ENCODE measurements at regions of chr3 and their contacts with region 1.

Region 1: GRCh38 chr3:142993958-142994442 is 7.4 kb upstream of the U2SURP start:
- DNase-seq: peak; percentile 44
- H3K4me3 ChIP-seq: no peak overlapping the region
- H3K27ac ChIP-seq: no peak overlapping the region
- H3K4me1 ChIP-seq: no peaks in the 10 kb centered on the region
- H3K27me3 ChIP-seq: no peaks in the 10 kb centered on the region
- CTCF ChIP-seq: peak; percentile 66

Region 2: DNA sequence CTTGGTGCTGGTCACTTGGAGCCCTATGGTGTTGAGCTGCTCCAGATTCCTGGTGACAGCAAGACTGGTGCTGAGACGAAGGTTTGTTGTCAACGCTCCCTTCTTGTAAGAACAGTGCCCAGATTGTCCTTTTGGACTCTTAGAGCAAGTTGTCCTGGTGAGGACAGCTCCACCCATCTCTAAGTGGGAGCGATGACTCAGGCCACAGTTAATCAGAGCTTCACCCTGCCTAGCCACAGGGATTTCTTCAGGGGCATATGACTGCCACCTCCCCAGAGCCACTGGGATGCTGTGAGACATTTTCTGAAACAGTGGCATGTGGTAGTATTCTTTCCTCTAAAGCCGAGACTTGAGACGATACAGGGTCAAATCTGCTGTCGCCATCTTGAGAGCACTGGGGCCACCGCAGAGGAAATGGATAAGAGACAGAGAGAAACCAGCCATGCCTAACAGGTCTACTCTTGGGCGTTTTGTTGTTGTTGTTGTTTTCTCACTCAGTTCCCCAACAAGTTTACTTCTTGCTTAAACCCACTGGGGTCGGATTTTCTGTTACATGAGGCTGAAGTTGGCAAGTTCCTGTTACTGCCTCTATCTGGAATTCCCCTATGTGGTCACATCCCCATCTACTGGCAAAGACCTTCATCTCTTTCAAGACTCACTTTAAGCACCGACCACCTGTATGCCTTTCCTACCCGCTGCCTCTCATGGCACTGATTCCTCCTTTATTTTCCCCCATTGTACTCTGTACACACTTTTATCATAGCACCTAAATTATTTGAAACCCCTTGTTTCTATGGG is 89.2 kb before region 1 on chr3:
- CTCF ChIA-PET with region 1: no interaction called
- dilution Hi-C with region 1: no loop called
- in situ Hi-C with region 1: no loop called
- intact Hi-C with region 1: no loop called
- DNase-seq: peak; percentile 71
- H3K4me3 ChIP-seq: no peak overlapping the region
- H3K27ac ChIP-seq: no peak overlapping the region
- H3K4me1 ChIP-seq: peaks cover 3% of the 10 kb centered on the region
- H3K27me3 ChIP-seq: no peaks in the 10 kb centered on the region
- CTCF ChIP-seq: peak in 1 of 2 donors; percentile 33

Region 3: GRCh38 chr3:142940000-142940399 is 54.0 kb before region 1 on chr3:
- CTCF ChIA-PET with region 1: no interaction called
- dilution Hi-C with region 1: loop called (anchors 5 kb)
- in situ Hi-C with region 1: loop called in 1 of 2 experiments (anchors 10 kb)
- intact Hi-C with region 1: no loop called
- DNase-seq: no peak
- H3K4me3 ChIP-seq: no peak overlapping the region
- H3K27ac ChIP-seq: no peak overlapping the region
- H3K4me1 ChIP-seq: no peaks in the 10 kb centered on the region
- H3K27me3 ChIP-seq: no peaks in the 10 kb centered on the region
- CTCF ChIP-seq: no peak

Region 4: GRCh38 chr3:142976621-142977398 is 17.2 kb before region 1 on chr3:
- CTCF ChIA-PET with region 1: no interaction called
- dilution Hi-C with region 1: no loop called
- in situ Hi-C with region 1: no loop called
- intact Hi-C with region 1: no loop called
- DNase-seq: peak; percentile 89
- H3K4me3 ChIP-seq: no peak overlapping the region
- H3K27ac ChIP-seq: peak overlapping the region; percentile 1
- H3K4me1 ChIP-seq: peaks cover 14% of the 10 kb centered on the region
- H3K27me3 ChIP-seq: no peaks in the 10 kb centered on the region
- CTCF ChIP-seq: no peak